PC-9 (cell line): ENCODE measurements at regions of chr12 and their contacts with region 1.

Region 1: GRCh38 chr12:47894068-47894467 is 10.7 kb downstream of the VDR start:
- DNase-seq: no peak
- H3K4me3 ChIP-seq: no peak overlapping the region
- H3K27ac ChIP-seq: no peak overlapping the region
- H3K4me1 ChIP-seq: peaks cover 24% of the 10 kb centered on the region
- H3K27me3 ChIP-seq: no peaks in the 10 kb centered on the region
- CTCF ChIP-seq: no peak

Region 2: DNA sequence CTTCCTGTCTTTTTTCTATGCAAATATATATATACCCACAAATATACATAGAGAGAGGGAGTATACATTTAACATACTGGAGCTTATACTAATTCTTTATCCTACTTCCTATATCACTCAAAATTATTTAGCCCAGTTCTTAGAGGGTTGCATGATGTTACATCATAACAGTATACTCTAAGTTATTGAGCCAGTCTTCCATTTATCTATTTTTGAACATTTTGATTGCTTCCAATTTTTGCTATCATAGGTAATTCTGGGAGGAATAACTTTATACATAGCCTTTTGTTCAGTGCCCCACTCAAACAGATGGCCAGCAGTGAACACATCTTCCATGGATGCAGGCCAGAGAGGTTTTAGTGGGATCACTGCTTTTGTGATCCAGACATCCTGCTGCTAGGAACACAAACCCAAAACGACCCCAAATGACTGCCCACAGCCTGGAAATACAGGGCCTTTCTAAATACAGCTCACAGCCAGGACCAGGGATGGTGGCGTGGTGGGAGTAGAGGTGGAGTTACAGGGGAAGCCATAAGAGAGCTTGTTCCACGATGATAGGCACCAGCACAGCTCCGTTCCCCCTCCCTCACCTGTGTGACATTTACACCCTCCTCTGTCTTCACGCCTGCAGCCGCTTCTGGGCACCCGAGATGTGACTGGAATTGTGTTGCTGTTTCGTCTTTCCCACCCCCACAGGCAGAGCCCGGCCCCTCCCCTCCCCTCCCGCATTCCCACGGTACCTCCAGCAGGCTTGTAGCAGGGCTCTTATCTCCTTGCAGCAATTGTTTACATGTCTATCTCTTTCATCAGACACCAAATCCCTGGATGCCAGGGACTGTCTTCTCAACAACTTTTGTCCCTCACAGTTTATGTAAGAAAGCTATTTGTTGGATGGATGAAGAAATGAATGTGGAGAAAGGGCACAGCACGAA is 43.6 kb before region 1 on chr12:
- CTCF ChIA-PET with region 1: no interaction called
- POLR2A ChIA-PET with region 1: no interaction called
- intact Hi-C with region 1: loop called (anchors 1 kb)
- DNase-seq: no peak
- H3K4me3 ChIP-seq: no peak overlapping the region
- H3K27ac ChIP-seq: no peak overlapping the region
- H3K4me1 ChIP-seq: no peaks in the 10 kb centered on the region
- H3K27me3 ChIP-seq: no peaks in the 10 kb centered on the region
- CTCF ChIP-seq: no peak